GM12878 (cell line): ENCODE measurements at regions of chr19 and their contacts with region 1.

Region 1: DNA sequence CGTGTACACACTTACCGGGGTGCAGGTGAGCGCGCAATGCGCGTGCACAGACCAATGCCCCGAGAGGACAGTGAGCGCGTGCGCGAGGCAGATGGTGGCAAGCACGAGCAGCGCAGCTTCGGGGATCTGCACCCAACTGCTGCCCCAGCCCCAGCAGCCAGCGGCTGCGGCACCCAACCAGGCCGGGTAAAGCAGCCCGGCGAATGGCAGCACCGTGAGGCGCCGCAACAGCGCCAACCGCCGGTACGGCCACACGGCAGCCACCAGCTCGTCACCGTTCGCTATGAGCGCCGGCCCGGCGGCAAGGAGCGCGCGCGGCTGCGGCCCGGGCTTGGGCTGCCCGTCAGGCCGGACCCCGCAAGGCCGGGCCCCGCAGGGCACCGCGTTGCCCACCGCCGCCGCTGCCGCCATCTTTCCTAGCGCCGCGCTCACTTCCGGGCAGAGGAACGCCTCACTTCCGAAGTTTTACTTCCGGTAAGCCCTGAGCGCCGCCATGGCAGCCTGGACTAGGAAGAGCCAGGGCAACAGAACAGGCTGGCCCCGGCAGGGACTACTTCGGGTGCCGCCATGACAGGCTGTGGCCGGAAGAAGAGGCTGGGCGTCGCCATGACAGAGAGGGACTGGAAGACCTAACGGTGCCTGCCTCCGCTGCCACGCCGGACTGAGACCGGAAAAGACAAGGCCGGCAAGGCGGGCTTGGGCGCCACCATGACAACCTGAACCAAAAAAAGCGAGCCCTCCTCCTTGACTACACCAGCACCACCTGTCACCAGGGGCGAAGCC is at the start of gene ATP13A1:
- DNase-seq: peak; percentile 92
- ATAC-seq: peak; percentile 78
- H3K4me3 ChIP-seq: peak within 1 kb of the TSS; percentile 87
- H3K27ac ChIP-seq: peak within 1 kb of the TSS; percentile 97
- H3K4me1 ChIP-seq: peaks cover 11% of the 10 kb centered on the region
- H3K27me3 ChIP-seq: no peaks in the 10 kb centered on the region
- CTCF ChIP-seq: no peak; a peak in 1 of 6 replicates
- EP300 ChIP-seq: no peak
- POLR2A ChIP-seq: peak; percentile 88
- RAD21 ChIP-seq: no peak
- polyA plus RNA-seq, gene ATP13A1: 0.37 to 1.4 TPM

Region 2: GRCh38 chr19:19627621-19628500 is 35.6 kb before region 1 on chr19 and contains the start of gene LPAR2:
- CTCF ChIA-PET with region 1: no interaction called
- POLR2A ChIA-PET with region 1: interaction called, 10 read pairs
- RAD21 ChIA-PET with region 1: no interaction called
- SMC1A ChIA-PET with region 1: interaction called, 4 read pairs
- in situ Hi-C with region 1: no loop called
- intact Hi-C with region 1: no loop called
- DNase-seq: no peak
- ATAC-seq: peak; percentile 86
- H3K4me3 ChIP-seq: peak within 1 kb of the TSS; percentile 76
- H3K27ac ChIP-seq: peak within 1 kb of the TSS; percentile 58
- H3K4me1 ChIP-seq: 0 out of 2 replicates have a peak, but pooled peaks cover 5% of the 10 kb centered on the region
- H3K27me3 ChIP-seq: no peaks in the 10 kb centered on the region
- CTCF ChIP-seq: 0 out of 6 replicates have a peak, but pooled peaks of 1 of the 3 experiments have one; percentile 4
- EP300 ChIP-seq: no peak
- POLR2A ChIP-seq: peak; percentile 31
- RAD21 ChIP-seq: no peak
- polyA plus RNA-seq, gene LPAR2: 0.98 to 3.2 TPM

Region 3: DNA sequence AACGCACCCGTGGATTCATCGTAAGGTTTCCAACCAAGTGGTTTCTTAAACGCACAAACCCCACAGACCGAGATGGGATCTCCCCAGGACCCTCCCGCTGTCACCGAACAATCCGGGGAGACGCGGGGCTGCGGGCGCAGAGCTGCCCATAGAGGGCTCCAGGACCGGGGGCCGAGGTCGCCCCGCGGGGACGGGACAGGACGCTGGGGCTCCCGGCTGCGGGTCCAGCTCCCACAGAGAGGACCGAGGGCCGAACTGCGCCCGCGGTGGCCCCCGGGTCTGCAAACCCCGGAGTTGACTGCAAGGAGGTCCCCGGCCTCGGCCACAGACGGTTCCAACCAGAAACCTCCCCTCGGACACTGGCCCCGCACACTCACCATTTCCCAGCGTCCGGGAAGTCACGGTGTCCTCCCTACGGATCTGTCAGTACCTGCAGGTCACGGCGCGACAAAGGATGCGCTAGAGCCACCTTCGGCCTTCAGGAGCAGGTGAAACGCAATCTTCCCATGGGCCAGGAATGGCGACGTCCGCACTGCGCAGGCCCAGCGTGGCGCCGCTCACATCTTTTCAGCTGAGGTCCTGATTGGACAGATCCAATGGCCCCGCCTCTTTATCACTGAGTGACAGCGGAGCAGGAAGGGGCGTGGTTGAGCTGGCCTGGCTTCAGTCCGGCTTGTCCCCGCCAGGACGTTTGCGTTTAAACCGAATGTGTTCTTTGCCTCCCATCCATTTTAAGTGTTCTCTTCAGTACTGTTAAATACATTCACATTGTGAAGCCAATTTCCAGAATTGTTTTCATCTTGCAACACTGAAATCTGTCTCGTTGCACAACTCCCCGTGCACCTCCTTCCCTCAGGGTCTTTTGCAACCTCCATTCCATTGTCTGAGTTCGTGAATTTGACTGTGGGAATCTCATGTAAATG is 69.4 kb after region 1 on chr19 and contains the start of gene ZNF14:
- CTCF ChIA-PET with region 1: no interaction called
- POLR2A ChIA-PET with region 1: interaction called, 7 read pairs
- RAD21 ChIA-PET with region 1: interaction called, 5 read pairs
- SMC1A ChIA-PET with region 1: interaction called, 3 read pairs
- in situ Hi-C with region 1: no loop called
- intact Hi-C with region 1: loop called (anchors 5 kb)
- DNase-seq: peak; percentile 84
- ATAC-seq: peak; percentile 100
- H3K4me3 ChIP-seq: peak within 1 kb of the TSS; percentile 91
- H3K27ac ChIP-seq: peak within 1 kb of the TSS; percentile 19; the same call in 1 of the 2 replicates
- H3K4me1 ChIP-seq: no peaks in the 10 kb centered on the region
- H3K27me3 ChIP-seq: no peaks in the 10 kb centered on the region
- CTCF ChIP-seq: peak in 1 of 3 experiments; percentile 20; a peak in 1 of 6 replicates
- EP300 ChIP-seq: no peak
- POLR2A ChIP-seq: peak; percentile 95
- RAD21 ChIP-seq: no peak
- polyA plus RNA-seq, gene ZNF14: 3.1 to 3.8 TPM

Region 4: GRCh38 chr19:19821366-19821951 is 158.0 kb after region 1 on chr19 and contains the start of gene ZNF506:
- CTCF ChIA-PET with region 1: interaction called, 3 read pairs
- POLR2A ChIA-PET with region 1: interaction called, 3 read pairs
- RAD21 ChIA-PET with region 1: interaction called, 10 read pairs
- SMC1A ChIA-PET with region 1: interaction called, 4 read pairs
- in situ Hi-C with region 1: no loop called
- intact Hi-C with region 1: loop called (anchors 5 kb)
- DNase-seq: peak; percentile 70
- ATAC-seq: peak; percentile 96
- H3K4me3 ChIP-seq: peak within 1 kb of the TSS; percentile 90
- H3K27ac ChIP-seq: peak within 1 kb of the TSS; percentile 96
- H3K4me1 ChIP-seq: peaks cover 2% of the 10 kb centered on the region; the same call in 1 of the 2 replicates
- H3K27me3 ChIP-seq: no peaks in the 10 kb centered on the region
- CTCF ChIP-seq: no peak
- EP300 ChIP-seq: no peak
- POLR2A ChIP-seq: peak; percentile 97
- RAD21 ChIP-seq: no peak
- polyA plus RNA-seq, gene ZNF506: 3.5 to 4.0 TPM

Region 5: GRCh38 chr19:19900729-19901444 is 237.4 kb after region 1 on chr19 and contains the start of gene ZNF93:
- CTCF ChIA-PET with region 1: interaction called, 5 read pairs
- POLR2A ChIA-PET with region 1: interaction called, 16 read pairs
- RAD21 ChIA-PET with region 1: interaction called, 12 read pairs
- SMC1A ChIA-PET with region 1: interaction called, 9 read pairs
- in situ Hi-C with region 1: no loop called
- intact Hi-C with region 1: loop called (anchors 10 kb)
- DNase-seq: peak; percentile 88
- ATAC-seq: peak; percentile 95
- H3K4me3 ChIP-seq: peak within 1 kb of the TSS; percentile 70
- H3K27ac ChIP-seq: peak within 1 kb of the TSS; percentile 78
- H3K4me1 ChIP-seq: no peaks in the 10 kb centered on the region
- H3K27me3 ChIP-seq: no peaks in the 10 kb centered on the region
- CTCF ChIP-seq: no peak
- EP300 ChIP-seq: no peak
- POLR2A ChIP-seq: peak; percentile 77
- RAD21 ChIP-seq: no peak
- polyA plus RNA-seq, gene ZNF93: 1.4 to 1.9 TPM